ENCODE measurements at regions of chr6 and their contacts with region 1.

Region 1: GRCh38 chr6:139597771-139598755 is 223.6 kb upstream of the CITED2 start:
- DNase-seq: no peak
- ATAC-seq: no peak
- H3K4me3 ChIP-seq: no peak overlapping the region
- H3K27ac ChIP-seq: no peak overlapping the region
- H3K4me1 ChIP-seq: peaks cover 9% of the 10 kb centered on the region
- H3K27me3 ChIP-seq: no peaks in the 10 kb centered on the region
- CTCF ChIP-seq: no peak
- EP300 ChIP-seq: no peak
- POLR2A ChIP-seq: no peak
- RAD21 ChIP-seq: no peak

Region 2: GRCh38 chr6:139278190-139278589 is 319.9 kb before region 1 on chr6:
- CTCF ChIA-PET with region 1: no interaction called
- POLR2A ChIA-PET with region 1: no interaction called
- RAD21 ChIA-PET with region 1: no interaction called
- SMC1A ChIA-PET with region 1: no interaction called
- in situ Hi-C with region 1: no loop called
- intact Hi-C with region 1: no loop called
- DNase-seq: no peak
- ATAC-seq: no peak
- H3K4me3 ChIP-seq: no peak overlapping the region
- H3K27ac ChIP-seq: no peak overlapping the region
- H3K4me1 ChIP-seq: peaks cover 9% of the 10 kb centered on the region
- H3K27me3 ChIP-seq: no peaks in the 10 kb centered on the region
- CTCF ChIP-seq: no peak
- EP300 ChIP-seq: no peak
- POLR2A ChIP-seq: no peak
- RAD21 ChIP-seq: no peak

Region 3: GRCh38 chr6:139580592-139581484 is 17.2 kb before region 1 on chr6:
- CTCF ChIA-PET with region 1: interaction called, 10 read pairs
- POLR2A ChIA-PET with region 1: no interaction called
- RAD21 ChIA-PET with region 1: interaction called, 3 read pairs
- SMC1A ChIA-PET with region 1: interaction called, 5 read pairs
- in situ Hi-C with region 1: no loop called
- intact Hi-C with region 1: no loop called
- DNase-seq: peak; percentile 56
- ATAC-seq: peak; percentile 89
- H3K4me3 ChIP-seq: no peak overlapping the region
- H3K27ac ChIP-seq: no peak overlapping the region
- H3K4me1 ChIP-seq: peaks cover 5% of the 10 kb centered on the region; the same call in 1 of the 2 replicates
- H3K27me3 ChIP-seq: no peaks in the 10 kb centered on the region
- CTCF ChIP-seq: no peak
- EP300 ChIP-seq: no peak
- POLR2A ChIP-seq: no peak
- RAD21 ChIP-seq: no peak

Region 4: GRCh38 chr6:139679516-139680179 is 81.6 kb after region 1 on chr6:
- CTCF ChIA-PET with region 1: no interaction called
- POLR2A ChIA-PET with region 1: no interaction called
- RAD21 ChIA-PET with region 1: no interaction called
- SMC1A ChIA-PET with region 1: no interaction called
- in situ Hi-C with region 1: no loop called
- intact Hi-C with region 1: no loop called
- DNase-seq: no peak
- ATAC-seq: no peak
- H3K4me3 ChIP-seq: no peak overlapping the region
- H3K27ac ChIP-seq: no peak overlapping the region
- H3K4me1 ChIP-seq: no peaks in the 10 kb centered on the region
- H3K27me3 ChIP-seq: no peaks in the 10 kb centered on the region
- CTCF ChIP-seq: no peak
- EP300 ChIP-seq: no peak
- POLR2A ChIP-seq: no peak
- RAD21 ChIP-seq: no peak

Region 5: GRCh38 chr6:139764498-139764986 is 166.5 kb after region 1 on chr6:
- CTCF ChIA-PET with region 1: no interaction called
- POLR2A ChIA-PET with region 1: interaction called, 4 read pairs
- RAD21 ChIA-PET with region 1: interaction called, 10 read pairs
- SMC1A ChIA-PET with region 1: interaction called, 7 read pairs
- in situ Hi-C with region 1: no loop called
- intact Hi-C with region 1: no loop called
- DNase-seq: peak; percentile 66
- ATAC-seq: peak; percentile 84
- H3K4me3 ChIP-seq: no peak overlapping the region
- H3K27ac ChIP-seq: peak overlapping the region; percentile 35
- H3K4me1 ChIP-seq: peaks cover 9% of the 10 kb centered on the region; the same call in 1 of the 2 replicates
- H3K27me3 ChIP-seq: no peaks in the 10 kb centered on the region
- CTCF ChIP-seq: no peak
- EP300 ChIP-seq: peak in 1 of 2 experiments; percentile 41; a peak in 1 of 4 replicates
- POLR2A ChIP-seq: no peak
- RAD21 ChIP-seq: no peak